Endothelial cell of umbilical vein (primary cell): ENCODE measurements at regions of chr9 and their contacts with region 1.

Region 1: GRCh38 chr9:28332648-28333047 is 759.4 kb upstream of the C9orf72 start:
- DNase-seq: peak; percentile 17
- H3K4me3 ChIP-seq: no peak overlapping the region
- H3K27ac ChIP-seq: no peak overlapping the region
- H3K4me1 ChIP-seq: no peaks in the 10 kb centered on the region
- H3K27me3 ChIP-seq: no peaks in the 10 kb centered on the region
- CTCF ChIP-seq: no peak
- POLR2A ChIP-seq: no peak

Region 2: GRCh38 chr9:27548055-27548741 is 784.5 kb before region 1 on chr9:
- CTCF ChIA-PET with region 1: no interaction called
- POLR2A ChIA-PET with region 1: no interaction called
- dilution Hi-C with region 1: no loop called
- intact Hi-C with region 1: no loop called
- DNase-seq: peak; percentile 41
- H3K4me3 ChIP-seq: no peak overlapping the region
- H3K27ac ChIP-seq: no peak overlapping the region
- H3K4me1 ChIP-seq: no peaks in the 10 kb centered on the region
- H3K27me3 ChIP-seq: no peaks in the 10 kb centered on the region
- CTCF ChIP-seq: peak in 1 of 2 donors; percentile 29
- POLR2A ChIP-seq: no peak

Region 3: GRCh38 chr9:28317745-28318144 is 14.9 kb before region 1 on chr9:
- CTCF ChIA-PET with region 1: no interaction called
- POLR2A ChIA-PET with region 1: no interaction called
- dilution Hi-C with region 1: no loop called
- intact Hi-C with region 1: no loop called
- DNase-seq: no peak
- H3K4me3 ChIP-seq: no peak overlapping the region
- H3K27ac ChIP-seq: no peak overlapping the region
- H3K4me1 ChIP-seq: no peaks in the 10 kb centered on the region
- H3K27me3 ChIP-seq: no peaks in the 10 kb centered on the region
- CTCF ChIP-seq: no peak
- POLR2A ChIP-seq: no peak

Region 4: GRCh38 chr9:28396058-28396457 is 63.4 kb after region 1 on chr9:
- CTCF ChIA-PET with region 1: no interaction called
- POLR2A ChIA-PET with region 1: no interaction called
- dilution Hi-C with region 1: no loop called
- intact Hi-C with region 1: no loop called
- DNase-seq: no peak
- H3K4me3 ChIP-seq: no peak overlapping the region
- H3K27ac ChIP-seq: no peak overlapping the region
- H3K4me1 ChIP-seq: no peaks in the 10 kb centered on the region
- H3K27me3 ChIP-seq: no peaks in the 10 kb centered on the region
- CTCF ChIP-seq: no peak
- POLR2A ChIP-seq: no peak

Region 5: GRCh38 chr9:28410411-28410810 is 77.8 kb after region 1 on chr9:
- CTCF ChIA-PET with region 1: no interaction called
- POLR2A ChIA-PET with region 1: no interaction called
- dilution Hi-C with region 1: no loop called
- intact Hi-C with region 1: loop called (anchors 10 kb)
- DNase-seq: no peak
- H3K4me3 ChIP-seq: no peak overlapping the region
- H3K27ac ChIP-seq: no peak overlapping the region
- H3K4me1 ChIP-seq: no peaks in the 10 kb centered on the region
- H3K27me3 ChIP-seq: no peaks in the 10 kb centered on the region
- CTCF ChIP-seq: no peak
- POLR2A ChIP-seq: no peak